ENCODE measurements at regions of chr10 and their contacts with region 1.

Region 1: GRCh38 chr10:68826764-68827591 is at the start of gene STOX1:
- DNase-seq: peak; percentile 86 to 93
- H3K4me3 ChIP-seq: peak within 1 kb of the TSS; percentile 77
- H3K4me3 Mint-ChIP-seq: peak within 1 kb of the TSS; percentile 90
- H3K27ac Mint-ChIP-seq: peak within 1 kb of the TSS; percentile 88
- H3K4me1 ChIP-seq: 0 out of 2 replicates have a peak, but pooled peaks cover 8% of the 10 kb centered on the region
- H3K4me1 Mint-ChIP-seq: peaks cover 14% of the 10 kb centered on the region
- H3K27me3 ChIP-seq: no peaks in the 10 kb centered on the region
- H3K27me3 Mint-ChIP-seq: no peaks in the 10 kb centered on the region
- CTCF ChIP-seq: peak; percentile 36 to 39
- total RNA-seq, gene STOX1: 8.5 and 9.0 TPM in 2 replicates

Region 2: DNA sequence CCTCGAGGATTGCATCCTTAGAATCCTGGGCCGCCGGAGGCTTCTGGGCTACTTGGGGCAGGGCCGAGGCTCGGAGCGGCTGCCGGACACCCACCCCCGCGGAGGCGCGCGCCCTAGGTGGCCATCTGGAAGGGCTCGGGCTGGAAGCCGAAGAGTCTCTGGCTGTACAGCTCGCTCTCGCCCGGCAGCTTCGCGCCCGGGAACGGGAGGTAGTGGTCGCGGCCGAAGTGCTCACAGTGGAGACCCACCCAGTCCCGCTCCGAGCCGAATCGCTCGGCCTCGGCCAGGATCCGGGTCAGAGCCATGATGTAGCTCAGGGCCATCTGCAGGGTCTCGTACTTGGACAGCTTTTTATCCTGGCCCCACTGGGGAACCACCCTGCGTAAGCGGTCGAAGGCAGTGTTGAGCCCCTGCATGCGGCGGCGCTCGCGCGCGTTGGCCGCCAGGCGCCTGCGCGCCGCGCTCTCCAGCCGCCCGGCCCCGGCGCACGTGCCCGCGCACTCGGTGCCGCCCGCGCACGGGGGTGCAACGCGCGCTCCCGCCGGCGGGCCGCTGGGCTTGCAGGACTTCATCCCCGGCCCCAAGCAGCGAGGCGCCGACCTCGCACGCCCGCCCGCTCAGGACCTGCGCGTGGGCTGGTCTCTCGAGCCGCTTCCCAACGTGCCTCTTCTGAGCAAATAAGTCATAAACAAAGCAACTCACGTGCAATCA is 595.7 kb before region 1 on chr10:
- CTCF ChIA-PET with region 1: no interaction called
- POLR2A ChIA-PET with region 1: interaction called, 13 read pairs
- intact Hi-C with region 1: no loop called
- DNase-seq: peak; percentile 89 to 94
- H3K4me3 ChIP-seq: peak overlapping the region; percentile 86
- H3K4me3 Mint-ChIP-seq: peak overlapping the region; percentile 87
- H3K27ac Mint-ChIP-seq: peak overlapping the region; percentile 72
- H3K4me1 ChIP-seq: 0 out of 2 replicates have a peak, but pooled peaks cover 5% of the 10 kb centered on the region
- H3K4me1 Mint-ChIP-seq: peaks cover 7% of the 10 kb centered on the region
- H3K27me3 ChIP-seq: no peaks in the 10 kb centered on the region
- H3K27me3 Mint-ChIP-seq: peaks cover 5% of the 10 kb centered on the region
- CTCF ChIP-seq: peak in 1 of 2 experiments; percentile 52

Region 3: DNA sequence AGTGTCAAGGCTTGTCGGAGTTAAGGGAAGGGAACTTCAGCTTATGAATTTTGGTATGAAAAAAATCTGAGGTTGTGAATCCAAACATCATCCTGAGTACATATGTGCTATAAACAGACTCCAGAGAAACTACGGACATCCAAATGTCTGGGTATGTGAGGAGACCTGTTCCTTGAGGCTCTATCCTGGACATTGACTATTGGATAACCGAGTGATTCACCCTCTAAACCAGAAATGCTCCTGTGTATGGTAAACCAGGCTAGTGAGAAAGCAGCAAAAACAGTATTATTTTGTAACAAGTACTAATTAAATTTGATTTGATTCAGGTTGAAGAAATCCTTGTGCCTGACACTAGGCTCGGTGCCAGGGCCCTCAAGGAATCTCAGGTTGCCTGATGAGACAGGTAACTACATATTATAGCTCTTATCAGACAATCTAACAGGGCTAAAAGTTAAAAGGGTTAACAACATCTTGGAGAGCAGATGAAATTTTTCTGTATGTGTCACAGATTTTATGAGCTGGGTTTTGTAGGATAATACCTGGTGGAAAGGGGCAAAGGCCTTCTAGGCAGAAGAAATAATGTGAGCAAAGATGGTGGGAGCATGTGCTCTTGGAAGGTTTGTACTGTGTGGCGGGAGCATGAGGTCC is 10.1 kb before region 1 on chr10:
- CTCF ChIA-PET with region 1: no interaction called
- POLR2A ChIA-PET with region 1: interaction called, 12 read pairs
- intact Hi-C with region 1: no loop called
- DNase-seq: no peak
- H3K4me3 ChIP-seq: no peak overlapping the region
- H3K4me3 Mint-ChIP-seq: no peak overlapping the region
- H3K27ac Mint-ChIP-seq: no peak overlapping the region
- H3K4me1 ChIP-seq: no peaks in the 10 kb centered on the region
- H3K4me1 Mint-ChIP-seq: no peaks in the 10 kb centered on the region
- H3K27me3 ChIP-seq: no peaks in the 10 kb centered on the region
- H3K27me3 Mint-ChIP-seq: no peaks in the 10 kb centered on the region
- CTCF ChIP-seq: no peak

Region 4: GRCh38 chr10:68864611-68865010 is 37.6 kb after region 1 on chr10:
- CTCF ChIA-PET with region 1: no interaction called
- POLR2A ChIA-PET with region 1: no interaction called
- intact Hi-C with region 1: no loop called
- DNase-seq: no peak
- H3K4me3 ChIP-seq: no peak overlapping the region
- H3K4me3 Mint-ChIP-seq: no peak overlapping the region
- H3K27ac Mint-ChIP-seq: no peak overlapping the region
- H3K4me1 ChIP-seq: no peaks in the 10 kb centered on the region
- H3K4me1 Mint-ChIP-seq: no peaks in the 10 kb centered on the region
- H3K27me3 ChIP-seq: no peaks in the 10 kb centered on the region
- H3K27me3 Mint-ChIP-seq: no peaks in the 10 kb centered on the region
- CTCF ChIP-seq: no peak

Region 5: GRCh38 chr10:68876246-68877138 is 49.5 kb after region 1 on chr10:
- CTCF ChIA-PET with region 1: interaction called, 10 read pairs
- POLR2A ChIA-PET with region 1: interaction called, 9 read pairs
- intact Hi-C with region 1: loop called (anchors 1 kb)
- DNase-seq: peak; percentile 73 to 74
- H3K4me3 ChIP-seq: no peak overlapping the region
- H3K4me3 Mint-ChIP-seq: no peak overlapping the region
- H3K27ac Mint-ChIP-seq: peak overlapping the region; percentile 56
- H3K4me1 ChIP-seq: peaks cover 39% of the 10 kb centered on the region
- H3K4me1 Mint-ChIP-seq: peaks cover 35% of the 10 kb centered on the region
- H3K27me3 ChIP-seq: no peaks in the 10 kb centered on the region
- H3K27me3 Mint-ChIP-seq: no peaks in the 10 kb centered on the region
- CTCF ChIP-seq: no peak

Region 6: DNA sequence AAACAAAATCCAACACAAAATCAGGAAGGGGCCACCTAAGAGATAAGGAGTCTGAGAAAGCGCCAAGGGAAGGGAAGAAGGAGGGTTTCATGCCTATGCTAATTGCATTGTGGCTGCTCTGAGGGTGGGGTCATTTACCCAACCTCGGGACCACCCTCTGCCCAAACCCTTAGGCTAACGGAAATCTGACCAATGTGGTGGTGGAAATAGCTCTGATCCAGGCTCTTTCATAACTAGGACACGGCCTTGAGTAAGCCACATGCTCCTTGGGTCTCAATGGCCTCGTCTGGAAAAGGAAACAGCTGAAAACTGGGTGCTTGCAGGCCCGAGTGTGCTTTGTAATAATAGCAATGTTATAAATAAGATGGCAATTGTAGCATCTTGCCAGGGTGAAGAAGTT is 246.0 kb after region 1 on chr10:
- CTCF ChIA-PET with region 1: no interaction called
- POLR2A ChIA-PET with region 1: no interaction called
- intact Hi-C with region 1: no loop called
- DNase-seq: no peak
- H3K4me3 ChIP-seq: no peak overlapping the region
- H3K4me3 Mint-ChIP-seq: no peak overlapping the region
- H3K27ac Mint-ChIP-seq: no peak overlapping the region
- H3K4me1 ChIP-seq: no peaks in the 10 kb centered on the region
- H3K4me1 Mint-ChIP-seq: no peaks in the 10 kb centered on the region
- H3K27me3 ChIP-seq: no peaks in the 10 kb centered on the region; the same call in 1 of the 2 replicates
- H3K27me3 Mint-ChIP-seq: peaks cover 4% of the 10 kb centered on the region
- CTCF ChIP-seq: no peak

Region 7: GRCh38 chr10:69383558-69383957 is 556.6 kb after region 1 on chr10:
- CTCF ChIA-PET with region 1: no interaction called
- POLR2A ChIA-PET with region 1: interaction called, 10 read pairs
- intact Hi-C with region 1: no loop called
- DNase-seq: peak in 1 of 2 experiments; percentile 59
- H3K4me3 ChIP-seq: no peak overlapping the region
- H3K4me3 Mint-ChIP-seq: no peak overlapping the region
- H3K27ac Mint-ChIP-seq: peak overlapping the region; percentile 29
- H3K4me1 ChIP-seq: peaks cover 19% of the 10 kb centered on the region
- H3K4me1 Mint-ChIP-seq: peaks cover 34% of the 10 kb centered on the region
- H3K27me3 ChIP-seq: no peaks in the 10 kb centered on the region
- H3K27me3 Mint-ChIP-seq: no peaks in the 10 kb centered on the region
- CTCF ChIP-seq: peak; percentile 16 to 50